ENCODE measurements at regions of chr15 and their contacts with region 1.

Region 1: GRCh38 chr15:40069178-40070165 is 30.5 kb upstream of the SRP14 start:
- DNase-seq: peak; percentile 76
- ATAC-seq: peak; percentile 80
- H3K4me3 ChIP-seq: peak overlapping the region; percentile 55 to 69 (median 58); a peak in 5 of 6 replicates
- H3K27ac ChIP-seq: peak overlapping the region; percentile 69
- H3K4me1 ChIP-seq: peaks cover 47% of the 10 kb centered on the region
- H3K27me3 ChIP-seq: no peaks in the 10 kb centered on the region
- CTCF ChIP-seq: no peak; the same call in 1 of the 2 replicates
- EP300 ChIP-seq: no peak
- POLR2A ChIP-seq: peak in 1 of 2 experiments; percentile 50; a peak in 1 of 4 replicates
- RAD21 ChIP-seq: peak; percentile 66

Region 2: DNA sequence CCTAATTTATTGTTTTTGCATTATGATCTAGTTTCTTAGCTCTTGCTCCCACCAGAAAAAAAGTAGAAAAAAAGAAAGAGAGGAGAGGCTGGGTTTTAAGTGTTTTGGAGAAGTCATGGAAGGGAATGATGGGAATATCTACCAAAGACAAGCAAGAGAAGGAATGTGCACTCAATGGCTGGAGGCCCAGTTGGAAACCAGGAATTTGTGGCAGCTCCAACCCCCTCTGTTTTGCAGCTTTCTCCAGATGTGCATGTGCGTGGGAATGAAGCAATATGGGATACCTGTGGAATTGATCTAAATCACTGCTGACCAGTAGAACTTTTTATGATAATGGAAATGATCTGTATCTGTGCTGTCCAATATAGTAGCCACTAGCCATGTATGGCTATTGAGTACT is 108.4 kb before region 1 on chr15:
- CTCF ChIA-PET with region 1: no interaction called
- POLR2A ChIA-PET with region 1: no interaction called
- in situ Hi-C with region 1: no loop called
- intact Hi-C with region 1: no loop called
- DNase-seq: no peak
- ATAC-seq: no peak
- H3K4me3 ChIP-seq: no peak overlapping the region
- H3K27ac ChIP-seq: no peak overlapping the region
- H3K4me1 ChIP-seq: no peaks in the 10 kb centered on the region
- H3K27me3 ChIP-seq: no peaks in the 10 kb centered on the region
- CTCF ChIP-seq: no peak
- EP300 ChIP-seq: no peak
- POLR2A ChIP-seq: no peak
- RAD21 ChIP-seq: no peak

Region 3: DNA sequence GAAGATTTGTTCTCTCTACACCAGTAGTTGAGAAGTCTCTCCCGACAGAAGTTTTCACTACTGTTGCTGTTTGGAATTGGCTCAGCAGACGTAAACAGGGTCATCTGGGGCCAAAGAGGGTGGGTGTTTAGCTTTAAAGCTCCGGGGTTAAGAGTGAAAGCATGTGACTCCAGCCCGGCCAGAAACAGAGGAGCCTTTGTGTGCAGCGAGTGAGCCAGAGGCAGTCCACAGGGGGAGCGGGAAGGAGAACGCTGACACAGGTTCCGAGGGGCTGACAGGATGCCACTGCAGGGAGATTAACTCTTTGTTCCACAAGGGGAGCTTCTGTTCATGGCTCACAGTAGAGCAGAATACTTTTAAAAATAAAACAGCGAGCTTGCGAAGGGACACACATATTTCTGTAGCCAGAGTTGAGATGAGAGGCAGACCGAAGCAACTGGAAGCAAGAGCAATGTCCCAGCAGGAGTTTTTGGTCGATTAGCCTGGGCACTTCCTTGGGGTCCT is 12.3 kb after region 1 on chr15:
- CTCF ChIA-PET with region 1: no interaction called
- POLR2A ChIA-PET with region 1: interaction called, 45 read pairs
- in situ Hi-C with region 1: no loop called
- intact Hi-C with region 1: no loop called
- DNase-seq: peak; percentile 96
- ATAC-seq: peak; percentile 98
- H3K4me3 ChIP-seq: peak overlapping the region; percentile 46 to 70 (median 69)
- H3K27ac ChIP-seq: peak overlapping the region; percentile 95
- H3K4me1 ChIP-seq: peaks cover 70% of the 10 kb centered on the region
- H3K27me3 ChIP-seq: no peaks in the 10 kb centered on the region; a peak in 1 of 5 replicates
- CTCF ChIP-seq: peak; percentile 33; the same call in 1 of the 2 replicates
- EP300 ChIP-seq: peak; percentile 81 to 92; a peak in 3 of 4 replicates
- POLR2A ChIP-seq: peak; percentile 69 to 74; a peak in 3 of 4 replicates
- RAD21 ChIP-seq: no peak; the same call in 1 of the 2 replicates

Region 4: DNA sequence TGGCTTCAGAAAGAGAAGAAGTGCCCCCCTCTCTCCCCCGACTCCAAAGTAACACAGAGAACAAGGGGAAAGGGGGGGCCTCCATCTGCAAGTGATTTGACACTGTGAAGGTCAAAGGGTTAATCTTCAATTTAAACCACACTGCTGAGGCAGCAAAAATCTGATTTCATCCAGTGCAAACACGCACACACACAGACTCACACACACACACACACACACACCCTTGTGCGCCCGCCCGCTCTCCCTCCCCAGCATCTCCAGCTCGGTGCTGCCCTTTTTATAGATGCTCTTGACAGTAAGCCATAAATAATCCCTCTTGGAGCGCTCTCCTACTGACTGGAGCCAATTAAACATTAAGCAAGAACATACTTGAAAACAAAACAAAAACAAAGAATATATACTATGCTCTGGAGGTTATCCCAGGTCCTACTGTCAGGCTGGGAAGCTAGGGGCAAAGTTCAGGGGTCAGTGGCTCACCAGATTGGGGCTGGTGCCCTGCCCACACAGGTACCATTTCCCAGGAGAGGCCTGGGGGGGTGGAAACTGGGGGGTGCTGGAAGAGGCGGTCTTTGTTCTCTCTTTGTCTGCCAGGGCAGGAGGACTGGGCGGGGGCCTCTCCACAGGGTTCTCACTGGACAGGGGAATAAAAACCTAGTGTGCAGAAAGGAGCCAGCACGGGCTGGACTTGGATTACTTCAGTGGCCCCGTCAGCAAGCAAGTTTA is 22.9 kb after region 1 on chr15:
- CTCF ChIA-PET with region 1: no interaction called
- POLR2A ChIA-PET with region 1: interaction called, 29 read pairs
- in situ Hi-C with region 1: no loop called
- intact Hi-C with region 1: no loop called
- DNase-seq: peak; percentile 84
- ATAC-seq: peak; percentile 66
- H3K4me3 ChIP-seq: peak overlapping the region; percentile 23 to 61 (median 34); a peak in 4 of 6 replicates
- H3K27ac ChIP-seq: peak overlapping the region; percentile 86
- H3K4me1 ChIP-seq: peaks cover 99% of the 10 kb centered on the region
- H3K27me3 ChIP-seq: no peaks in the 10 kb centered on the region
- CTCF ChIP-seq: no peak
- EP300 ChIP-seq: peak; percentile 23 to 80; a peak in 2 of 4 replicates
- POLR2A ChIP-seq: peak in 1 of 2 experiments; percentile 46; a peak in 1 of 4 replicates
- RAD21 ChIP-seq: no peak

Region 5: GRCh38 chr15:40146037-40146436 is 76.6 kb after region 1 on chr15:
- CTCF ChIA-PET with region 1: no interaction called
- POLR2A ChIA-PET with region 1: no interaction called
- in situ Hi-C with region 1: no loop called
- intact Hi-C with region 1: no loop called
- DNase-seq: no peak
- ATAC-seq: no peak
- H3K4me3 ChIP-seq: no peak overlapping the region
- H3K27ac ChIP-seq: no peak overlapping the region
- H3K4me1 ChIP-seq: peaks cover 19% of the 10 kb centered on the region
- H3K27me3 ChIP-seq: peaks cover 2 to 28% of the 10 kb centered on the region in 2 experiments; a peak in 3 of 5 replicates
- CTCF ChIP-seq: no peak
- EP300 ChIP-seq: no peak
- POLR2A ChIP-seq: no peak
- RAD21 ChIP-seq: no peak

Measured in HepG2 (cell line).